Breast epithelium (tissue), 4 donors: ENCODE measurements at regions of chr20 and their contacts with region 1.

Region 1: DNA sequence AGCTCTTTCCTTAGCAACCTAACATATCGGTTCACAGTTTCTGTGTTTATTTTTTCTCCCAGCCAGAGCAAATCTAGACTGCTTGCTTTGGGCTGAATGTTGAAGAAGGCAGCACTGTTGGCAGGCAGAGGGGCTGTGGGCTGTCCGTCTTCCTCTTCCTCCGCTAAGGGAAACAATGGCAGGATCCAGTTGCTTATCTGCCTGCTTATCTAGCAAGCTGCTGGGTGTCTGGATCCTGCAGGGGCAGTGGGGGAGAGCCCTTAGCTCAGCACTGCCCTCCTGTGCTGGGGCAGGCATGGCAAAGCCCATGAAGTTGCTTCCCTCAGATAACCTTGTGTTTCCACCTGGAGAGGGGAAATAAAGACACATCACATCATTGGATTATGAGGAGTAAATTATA is 92.7 kb upstream of the CD93 start:
- DNase-seq: no peak
- H3K4me3 ChIP-seq: no peak overlapping the region
- H3K27ac ChIP-seq: peak overlapping the region in 1 of 2 donors; percentile 1
- H3K4me1 ChIP-seq: no peaks in the 10 kb centered on the region
- H3K27me3 ChIP-seq: no peaks in the 10 kb centered on the region
- CTCF ChIP-seq: no peak
- POLR2A ChIP-seq: no peak

Region 2: DNA sequence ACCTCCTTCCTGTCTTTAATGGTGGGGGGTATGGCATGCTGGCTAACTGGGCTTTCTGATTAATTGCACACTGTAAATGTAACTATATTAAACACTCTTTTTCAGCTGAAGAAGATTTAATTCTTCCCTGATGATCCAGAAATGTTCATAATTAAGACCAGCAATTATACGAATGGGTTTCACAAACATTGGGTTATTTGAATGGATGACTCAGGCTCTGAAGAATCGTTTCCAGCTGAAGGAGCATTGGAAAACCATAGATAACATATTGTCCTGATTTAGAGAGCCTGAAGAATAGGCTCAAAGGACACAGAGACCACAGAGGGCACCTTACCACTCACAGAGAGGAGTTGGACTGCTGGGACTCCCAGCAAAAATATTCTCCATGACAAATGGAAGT is 274.4 kb before region 1 on chr20:
- intact Hi-C with region 1: loop called (anchors 5 kb)
- DNase-seq: no peak
- H3K4me3 ChIP-seq: no peak overlapping the region
- H3K27ac ChIP-seq: peak overlapping the region in 1 of 2 donors; percentile 43
- H3K4me1 ChIP-seq: no peaks in the 10 kb centered on the region
- H3K27me3 ChIP-seq: no peaks in the 10 kb centered on the region
- CTCF ChIP-seq: no peak
- POLR2A ChIP-seq: no peak